ENCODE measurements at regions of chr16 and their contacts with region 1.

Region 1: GRCh38 chr16:9268446-9268845 is 177.0 kb downstream of the HAPSTR1 start:
- DNase-seq: no peak
- ATAC-seq: no peak
- H3K4me3 ChIP-seq: no peak overlapping the region
- H3K4me1 ChIP-seq: no peaks in the 10 kb centered on the region
- CTCF ChIP-seq: no peak

Region 2: GRCh38 chr16:9625122-9625521 is 356.7 kb after region 1 on chr16:
- intact Hi-C with region 1: loop called in 1 of 2 experiments (anchors 5 kb)
- DNase-seq: no peak
- ATAC-seq: no peak
- H3K4me3 ChIP-seq: no peak overlapping the region
- H3K4me1 ChIP-seq: no peaks in the 10 kb centered on the region
- CTCF ChIP-seq: no peak

Region 3: DNA sequence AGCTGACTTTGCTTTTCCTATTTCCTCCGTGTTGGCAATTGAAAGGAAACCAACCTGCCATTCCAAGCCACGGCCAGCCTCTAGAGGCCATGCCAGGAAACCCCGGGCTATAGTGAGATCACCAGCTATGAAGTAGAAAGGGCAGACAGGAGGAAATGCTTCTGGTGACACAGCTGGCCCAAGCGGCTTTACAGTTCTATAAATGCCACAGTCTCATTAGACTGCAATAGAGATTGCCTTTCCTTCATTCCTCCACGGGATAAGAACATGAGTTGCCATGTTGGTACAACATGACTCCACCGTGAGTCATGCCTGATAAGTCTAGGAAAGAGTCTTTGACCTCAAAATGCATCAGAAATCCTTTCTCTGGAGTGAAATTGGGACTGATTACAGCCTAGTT is 528.9 kb after region 1 on chr16:
- intact Hi-C with region 1: no loop called
- DNase-seq: no peak
- ATAC-seq: peak; percentile 80
- H3K4me3 ChIP-seq: no peak overlapping the region
- H3K4me1 ChIP-seq: no peaks in the 10 kb centered on the region
- CTCF ChIP-seq: no peak

Measured in mucosa of descending colon (tissue), 3 donors.